Heart left ventricle (tissue), 16 donors: ENCODE measurements at regions of chr15 and their contacts with region 1.

Region 1: DNA sequence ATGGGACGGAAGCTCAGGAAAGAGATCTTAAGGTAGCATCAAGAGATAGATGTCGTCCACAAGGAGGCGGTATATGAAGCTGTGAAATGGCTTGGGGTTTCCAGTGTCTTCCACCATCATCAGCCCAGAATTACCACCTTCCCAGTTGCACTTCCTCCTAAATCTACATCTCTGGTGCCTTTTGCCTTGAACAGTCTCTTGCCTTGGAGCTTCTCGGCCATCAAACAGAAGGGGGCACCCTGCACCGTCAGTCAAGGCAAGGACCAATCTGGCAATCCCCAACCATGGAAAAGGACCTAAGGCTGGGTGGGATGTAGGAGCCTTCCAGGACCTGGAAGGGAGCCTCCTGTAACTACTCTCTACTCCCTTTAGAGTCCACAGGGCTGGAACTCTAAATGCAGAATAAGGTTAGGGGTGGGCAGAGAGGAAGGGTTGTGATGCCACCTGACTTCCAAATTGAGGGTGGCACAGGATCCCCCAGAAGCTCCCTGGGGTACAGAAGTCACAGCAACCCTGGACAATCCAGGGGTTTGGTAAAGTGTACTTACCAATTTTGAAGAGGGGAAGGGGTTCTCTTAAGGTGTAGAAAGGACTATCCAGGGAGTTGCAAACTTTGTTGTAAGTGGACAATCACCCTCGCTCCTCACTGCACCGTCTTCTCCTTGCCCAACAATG is 1.0 kb upstream of the RYR3 start:
- DNase-seq: peak in 2 of 5 donors; percentile 22 to 24
- ATAC-seq: peak in 3 of 4 donors; percentile 59 to 61 (median 61)
- H3K4me3 ChIP-seq: no peak overlapping the region
- H3K27ac ChIP-seq: no peak overlapping the region
- H3K4me1 ChIP-seq: peaks cover 0 to 8% (median 0%) of the 10 kb centered on the region in 12 donors
- H3K27me3 ChIP-seq: peaks cover 0 to 56% (median 19%) of the 10 kb centered on the region in 9 donors
- CTCF ChIP-seq: peak in 5 of 12 donors; percentile 17 to 47 (median 37)
- POLR2A ChIP-seq: no peak

Region 2: GRCh38 chr15:33360886-33361285 is 51.1 kb after region 1 on chr15:
- intact Hi-C with region 1: loop called in 1 of 10 experiments (anchors 10 kb)
- DNase-seq: peak in 3 of 5 donors; percentile 16 to 39 (median 39)
- ATAC-seq: peak in 3 of 4 donors; percentile 65 to 68 (median 67)
- H3K4me3 ChIP-seq: no peak overlapping the region
- H3K27ac ChIP-seq: no peak overlapping the region
- H3K4me1 ChIP-seq: no peaks in the 10 kb centered on the region
- H3K27me3 ChIP-seq: peaks cover 0 to 5% (median 0%) of the 10 kb centered on the region in 9 donors
- CTCF ChIP-seq: no peak
- POLR2A ChIP-seq: no peak

Region 3: GRCh38 chr15:33675246-33675645 is 365.5 kb after region 1 on chr15:
- intact Hi-C with region 1: loop called in 1 of 10 experiments (anchors 10 kb)
- DNase-seq: no peak
- ATAC-seq: no peak
- H3K4me3 ChIP-seq: no peak overlapping the region
- H3K27ac ChIP-seq: no peak overlapping the region
- H3K4me1 ChIP-seq: no peaks in the 10 kb centered on the region
- H3K27me3 ChIP-seq: peaks cover 0 to 10% (median 3%) of the 10 kb centered on the region in 9 donors
- CTCF ChIP-seq: peak in 6 of 12 donors; percentile 9 to 52 (median 39)
- POLR2A ChIP-seq: no peak

Region 4: GRCh38 chr15:34246276-34246976 is 936.7 kb after region 1 on chr15:
- intact Hi-C with region 1: no loop called
- DNase-seq: no peak
- ATAC-seq: no peak
- H3K4me3 ChIP-seq: no peak overlapping the region
- H3K27ac ChIP-seq: no peak overlapping the region
- H3K4me1 ChIP-seq: no peaks in the 10 kb centered on the region
- H3K27me3 ChIP-seq: no peaks in the 10 kb centered on the region
- CTCF ChIP-seq: no peak
- POLR2A ChIP-seq: no peak